ENCODE measurements at regions of chr5 and their contacts with region 1.

Region 1: DNA sequence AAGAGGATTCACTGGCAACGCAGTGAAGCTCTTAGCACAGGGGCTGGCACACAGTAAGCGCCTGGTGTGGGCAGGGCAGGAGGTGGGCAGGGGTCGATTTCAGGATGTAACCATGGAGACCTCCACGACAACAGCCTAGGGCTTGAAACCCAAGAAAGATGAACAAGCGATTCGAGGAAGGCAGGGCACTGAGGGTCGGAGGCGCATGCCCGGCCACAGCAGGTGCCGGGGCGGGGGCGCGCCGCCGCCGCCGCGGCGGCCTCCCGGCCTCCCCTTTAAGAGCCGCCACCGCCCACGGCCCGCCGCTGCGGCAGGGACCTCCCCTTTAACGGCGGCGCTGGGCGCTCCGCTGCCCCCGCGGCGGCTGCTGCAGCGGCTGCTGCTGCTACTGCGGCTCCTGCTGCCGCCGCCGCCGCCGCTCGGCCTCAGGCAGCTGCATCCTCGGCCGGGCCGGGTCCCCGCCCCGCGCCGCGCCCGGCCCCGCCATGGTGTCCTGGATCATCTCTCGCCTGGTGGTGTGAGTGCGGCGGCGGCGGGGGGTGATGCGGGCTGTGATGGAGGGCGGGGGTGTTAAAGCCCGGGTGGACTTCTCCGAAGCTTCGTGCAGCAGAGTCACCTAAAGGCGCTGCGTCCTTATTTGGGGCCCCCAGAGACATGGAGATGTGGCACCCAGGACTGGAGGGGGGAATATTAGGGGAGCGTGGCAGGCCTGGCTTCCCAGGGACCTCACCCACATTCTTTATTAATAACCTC is at the start of gene REEP2:
- DNase-seq: peak in 33 of 35 experiments; percentile 12 to 76 (median 46)
- ATAC-seq: peak; percentile 83 to 90 (median 84)
- H3K4me3 ChIP-seq: peak within 1 kb of the TSS; percentile 41 to 60
- H3K4me3 Mint-ChIP-seq: peak within 1 kb of the TSS; percentile 75 to 80 (median 76)
- H3K27ac ChIP-seq: peak within 1 kb of the TSS; percentile 4
- H3K27ac Mint-ChIP-seq: peak within 1 kb of the TSS in 1 of 2 donors; percentile 0
- H3K4me1 ChIP-seq: peaks cover 0 to 16% of the 10 kb centered on the region in 2 experiments
- H3K4me1 Mint-ChIP-seq: peaks cover 16 to 22% (median 18%) of the 10 kb centered on the region in 3 donors
- H3K27me3 ChIP-seq: peaks cover 0 to 13% of the 10 kb centered on the region in 2 experiments
- H3K27me3 Mint-ChIP-seq: peaks cover 0 to 6% of the 10 kb centered on the region in 2 donors
- total RNA-seq, gene REEP2: 0.18 to 0.61 (median 0.42) TPM

Region 2: GRCh38 chr5:138508963-138509362 is 70.1 kb after region 1 on chr5:
- CTCF ChIA-PET with region 1: interaction called, 4 to 11 read pairs
- POLR2A ChIA-PET with region 1: no interaction called
- DNase-seq: no peak
- ATAC-seq: no peak
- H3K4me3 ChIP-seq: no peak overlapping the region
- H3K4me3 Mint-ChIP-seq: no peak overlapping the region
- H3K27ac ChIP-seq: no peak overlapping the region
- H3K27ac Mint-ChIP-seq: no peak overlapping the region
- H3K4me1 ChIP-seq: no peaks in the 10 kb centered on the region
- H3K4me1 Mint-ChIP-seq: no peaks in the 10 kb centered on the region
- H3K27me3 ChIP-seq: no peaks in the 10 kb centered on the region
- H3K27me3 Mint-ChIP-seq: no peaks in the 10 kb centered on the region

Region 3: DNA sequence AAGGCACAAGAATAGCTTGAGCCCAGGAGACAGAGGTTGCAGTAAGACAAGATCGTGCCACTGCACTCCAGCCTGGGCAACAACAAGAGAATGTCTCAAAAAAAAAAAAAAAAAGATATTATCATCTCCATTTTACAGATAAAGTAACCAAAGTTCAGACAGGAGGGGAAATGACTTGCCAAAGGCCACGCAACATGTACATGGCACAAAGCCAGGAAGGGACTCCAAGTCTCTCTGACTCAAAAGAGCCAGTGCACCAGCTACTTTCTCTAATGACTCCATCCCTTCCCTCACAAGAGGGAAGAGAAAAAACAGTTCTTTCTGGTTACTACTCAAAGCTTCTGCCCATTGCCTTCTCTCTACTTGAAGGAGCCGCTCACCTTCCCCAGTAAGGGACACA is 725.1 kb after region 1 on chr5:
- CTCF ChIA-PET with region 1: no interaction called
- POLR2A ChIA-PET with region 1: no interaction called
- DNase-seq: no peak
- ATAC-seq: no peak
- H3K4me3 ChIP-seq: no peak overlapping the region
- H3K4me3 Mint-ChIP-seq: no peak overlapping the region
- H3K27ac ChIP-seq: no peak overlapping the region
- H3K27ac Mint-ChIP-seq: no peak overlapping the region
- H3K4me1 ChIP-seq: no peaks in the 10 kb centered on the region
- H3K4me1 Mint-ChIP-seq: peaks cover 0 to 3% (median 0%) of the 10 kb centered on the region in 3 donors
- H3K27me3 ChIP-seq: no peaks in the 10 kb centered on the region
- H3K27me3 Mint-ChIP-seq: no peaks in the 10 kb centered on the region

Measured in T-cell (primary cell).